Dorsolateral prefrontal cortex (tissue), 120 donors: ENCODE measurements at regions of chr19 and their contacts with region 1.

Region 1: DNA sequence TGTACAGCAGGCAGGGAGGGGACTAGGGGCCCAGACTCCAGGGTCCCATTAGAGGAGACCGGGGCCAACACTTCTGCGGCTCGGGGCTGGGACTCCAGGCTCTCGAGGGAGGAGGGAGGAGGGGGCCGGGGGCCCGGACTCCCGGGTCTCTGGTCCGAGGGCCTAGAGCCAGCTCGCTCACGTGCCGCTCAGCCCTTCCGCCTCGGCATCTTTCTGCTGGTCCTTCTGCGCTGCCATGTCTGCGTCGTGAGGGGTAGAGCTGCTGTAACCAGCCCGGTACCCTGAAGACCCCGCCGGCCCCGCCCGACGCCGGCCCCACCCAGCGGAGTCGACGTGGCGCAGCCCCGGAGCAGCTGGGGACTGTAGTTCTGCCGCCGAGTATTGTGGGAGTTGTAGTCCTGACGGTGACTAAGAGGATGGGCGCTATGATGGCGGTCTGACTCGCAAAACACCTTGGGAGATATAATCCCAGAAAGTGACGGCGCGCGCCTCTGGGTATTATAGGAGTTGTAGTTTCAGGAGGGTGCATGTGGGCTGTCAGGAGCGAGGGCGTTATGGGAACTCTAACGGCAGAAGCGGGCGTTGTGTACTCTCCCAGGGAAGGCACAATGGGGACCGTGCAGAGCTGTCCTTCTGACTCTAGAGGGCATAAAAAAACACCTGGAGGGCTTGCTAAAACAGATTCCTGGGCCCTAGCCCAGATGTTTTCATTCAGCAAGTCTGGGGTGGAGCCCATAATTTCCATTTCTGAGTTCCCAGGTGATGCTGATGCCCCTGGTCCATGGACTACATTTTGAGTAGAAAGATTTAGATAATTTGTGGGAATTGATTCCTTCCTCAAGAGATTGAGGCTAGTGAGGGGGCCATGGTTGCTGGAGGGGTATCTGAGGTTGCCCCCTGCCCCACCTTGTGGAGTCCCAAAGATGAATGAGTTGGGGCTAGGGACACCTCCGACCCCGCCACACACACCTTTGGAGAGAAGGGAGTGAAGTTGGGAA is at the start of gene RABAC1:
- DNase-seq: peak; percentile 77 to 96 (median 94)
- H3K4me3 ChIP-seq: peak within 1 kb of the TSS; percentile 71 to 99 (median 94)
- H3K27ac ChIP-seq: peak within 1 kb of the TSS in 58 of 59 donors; percentile 48 to 95 (median 84)
- H3K27me3 ChIP-seq: no peaks in the 10 kb centered on the region
- CTCF ChIP-seq: peak in 36 of 56 donors; percentile 9 to 56 (median 34)
- total RNA-seq, gene RABAC1: 113 to 188 (median 144) TPM

Region 2: DNA sequence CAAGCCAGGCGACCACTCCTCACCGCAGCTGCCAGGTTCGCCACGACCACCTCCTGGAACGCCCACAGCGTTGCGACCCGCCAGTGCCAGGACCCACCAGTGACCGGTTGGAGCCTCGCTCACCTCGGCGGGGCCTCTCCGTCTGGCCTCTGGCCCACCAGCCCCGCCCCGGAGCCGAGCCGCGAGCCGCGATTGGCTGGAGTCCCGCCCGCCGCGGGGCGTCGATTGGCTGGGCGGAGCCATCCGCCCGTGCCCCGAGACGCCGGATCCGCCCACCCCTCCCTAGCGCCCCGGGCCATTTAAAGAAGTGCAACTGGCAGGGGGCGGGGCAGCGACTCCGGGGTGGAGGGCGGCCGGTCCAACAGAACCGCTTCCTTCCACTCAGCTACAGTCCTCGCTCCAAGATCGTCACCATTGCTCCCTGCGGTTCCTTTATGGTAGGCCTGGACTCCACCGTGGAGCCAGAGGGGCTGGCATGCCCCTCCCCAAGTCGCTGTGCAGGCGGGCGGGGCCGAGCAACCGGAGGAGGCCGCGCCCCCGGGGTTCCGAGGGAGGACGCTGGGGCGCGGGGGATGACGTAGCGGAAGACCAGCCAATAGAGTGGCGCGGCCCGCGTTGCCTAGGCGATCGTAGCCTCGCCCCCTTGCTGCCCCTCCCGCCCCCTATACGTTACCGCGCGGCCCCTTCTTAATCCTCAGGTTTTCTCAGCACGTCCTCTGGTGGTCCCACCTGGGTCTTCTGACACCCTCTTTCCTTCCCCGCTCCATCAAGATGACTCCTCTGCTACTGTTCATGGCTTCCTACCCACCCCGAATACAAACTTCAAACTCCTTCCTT is 1514.9 kb before region 1 on chr19 and contains the start of gene SERTAD3:
- intact Hi-C with region 1: loop called in 1 of 2 experiments (anchors 10 kb)
- DNase-seq: peak; percentile 93 to 99 (median 95)
- H3K4me3 ChIP-seq: peak within 1 kb of the TSS; percentile 50 to 94 (median 83)
- H3K27ac ChIP-seq: peak within 1 kb of the TSS; percentile 82 to 99 (median 97)
- H3K27me3 ChIP-seq: no peaks in the 10 kb centered on the region
- CTCF ChIP-seq: peak in 36 of 56 donors; percentile 5 to 54 (median 24)
- total RNA-seq, gene SERTAD3: 3.5 to 29.8 (median 9.8) TPM

Region 3: DNA sequence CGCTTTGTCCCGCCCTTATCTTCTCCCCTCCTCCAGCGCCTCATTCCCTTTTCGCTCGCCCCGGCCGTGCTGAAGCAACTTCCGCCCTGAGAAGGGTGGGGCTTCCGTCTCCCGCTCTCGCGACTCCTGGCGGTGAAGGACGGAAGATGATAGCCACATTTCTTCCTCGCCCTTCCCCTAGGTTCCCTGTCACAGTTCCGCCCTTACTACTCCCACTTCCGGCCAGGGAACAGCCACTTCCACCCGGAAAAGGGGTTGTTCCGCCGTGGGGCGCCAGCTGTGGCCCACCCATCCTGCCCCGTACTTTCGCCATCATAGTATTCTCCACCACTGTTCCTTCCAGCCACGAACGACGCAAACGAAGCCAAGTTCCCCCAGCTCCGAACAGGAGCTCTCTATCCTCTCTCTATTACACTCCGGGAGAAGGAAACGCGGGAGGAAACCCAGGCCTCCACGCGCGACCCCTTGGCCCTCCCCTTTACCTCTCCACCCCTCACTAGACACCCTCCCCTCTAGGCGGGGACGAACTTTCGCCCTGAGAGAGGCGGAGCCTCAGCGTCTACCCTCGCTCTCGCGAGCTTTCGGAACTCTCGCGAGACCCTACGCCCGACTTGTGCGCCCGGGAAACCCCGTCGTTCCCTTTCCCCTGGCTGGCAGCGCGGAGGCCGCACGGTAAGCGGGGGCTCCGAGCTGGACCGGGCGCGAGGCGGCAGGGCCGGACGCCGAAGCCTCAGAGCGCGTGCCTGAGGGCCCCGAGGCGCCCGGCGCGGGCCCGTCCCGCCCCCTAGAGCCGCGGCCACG is 99.5 kb before region 1 on chr19 and contains the start of gene RPS19:
- intact Hi-C with region 1: loop called (anchors 2 kb)
- DNase-seq: peak; percentile 97 to 99 (median 98)
- H3K4me3 ChIP-seq: peak within 1 kb of the TSS; percentile 51 to 99 (median 90)
- H3K27ac ChIP-seq: peak within 1 kb of the TSS; percentile 79 to 99 (median 96)
- H3K27me3 ChIP-seq: no peaks in the 10 kb centered on the region
- CTCF ChIP-seq: peak; percentile 44 to 89 (median 78)
- total RNA-seq, gene RPS19: 344 to 718 (median 462) TPM

Region 4: DNA sequence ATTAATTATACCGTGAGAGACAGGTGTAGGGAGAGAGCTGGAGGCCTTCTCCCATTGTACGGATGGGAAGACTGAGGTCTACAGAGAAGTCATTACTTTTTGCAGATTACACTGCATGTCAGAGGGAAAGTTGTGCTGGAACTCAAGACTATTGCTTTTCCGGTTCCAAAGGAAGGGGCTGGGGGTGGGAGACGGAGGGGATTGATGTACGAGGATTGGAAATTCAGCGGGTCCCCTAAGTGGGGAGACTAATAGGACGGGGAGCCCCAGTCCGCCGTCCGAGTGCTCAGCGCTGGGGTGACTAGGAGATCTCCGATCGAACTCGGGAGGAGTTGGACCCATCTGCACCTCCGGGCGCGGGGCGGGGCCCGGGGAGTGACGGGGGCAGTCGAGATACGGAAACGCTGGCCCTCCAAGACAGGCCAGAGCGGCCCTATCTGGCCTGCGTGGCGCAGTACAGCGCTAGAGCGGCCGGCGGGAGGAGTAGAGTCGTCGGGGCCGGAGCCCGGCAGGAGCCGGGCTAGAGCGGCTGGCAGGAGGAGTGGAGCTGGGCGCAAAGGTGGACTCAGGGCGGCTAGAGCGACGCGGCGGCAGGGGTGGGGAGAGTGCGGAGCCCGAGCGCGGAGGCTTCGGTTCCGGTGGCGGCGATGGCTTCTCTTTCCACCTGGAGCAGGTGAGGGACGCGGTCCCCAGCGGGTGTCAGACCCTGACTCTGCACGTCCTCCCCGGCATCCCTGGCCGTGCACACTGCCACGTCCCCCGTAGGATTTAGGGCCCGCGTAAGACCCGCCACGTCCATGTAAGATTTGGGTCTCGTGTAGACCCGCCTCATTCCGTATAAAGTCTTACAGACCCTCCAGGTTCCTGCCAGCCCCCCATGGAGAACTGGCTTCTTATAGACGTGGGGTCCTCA is 75.3 kb before region 1 on chr19:
- intact Hi-C with region 1: loop called (anchors 5 kb)
- DNase-seq: peak; percentile 89 to 98 (median 96)
- H3K4me3 ChIP-seq: peak overlapping the region; percentile 61 to 99 (median 90)
- H3K27ac ChIP-seq: peak overlapping the region in 54 of 59 donors; percentile 3 to 91 (median 80)
- H3K27me3 ChIP-seq: no peaks in the 10 kb centered on the region
- CTCF ChIP-seq: peak in 54 of 56 donors; percentile 17 to 76 (median 54)

Region 5: GRCh38 chr19:42032431-42032830 is 73.1 kb after region 1 on chr19:
- intact Hi-C with region 1: loop called in 1 of 2 experiments (anchors 5 kb)
- DNase-seq: no peak
- H3K4me3 ChIP-seq: no peak overlapping the region
- H3K27ac ChIP-seq: peak overlapping the region in 8 of 59 donors; percentile 1 to 37 (median 18)
- H3K27me3 ChIP-seq: no peaks in the 10 kb centered on the region
- CTCF ChIP-seq: no peak

Region 6: GRCh38 chr19:42219812-42220750 is 260.7 kb after region 1 on chr19 and contains the start of gene ZNF526:
- intact Hi-C with region 1: loop called in 1 of 2 experiments (anchors 10 kb)
- DNase-seq: peak; percentile 95 to 99 (median 97)
- H3K4me3 ChIP-seq: peak within 1 kb of the TSS; percentile 63 to 100 (median 91)
- H3K27ac ChIP-seq: peak within 1 kb of the TSS in 57 of 59 donors; percentile 36 to 100 (median 85)
- H3K27me3 ChIP-seq: no peaks in the 10 kb centered on the region
- CTCF ChIP-seq: peak in 26 of 56 donors; percentile 4 to 52 (median 20)
- total RNA-seq, gene ZNF526: 5.3 to 12.0 (median 7.5) TPM